Activated CD4-positive, alpha-beta memory T cell treated with anti-CD3 and anti-CD28 coated beads for 36 hours (primary cell): ENCODE measurements at regions of chr17 and their contacts with region 1.

Region 1: GRCh38 chr17:43846221-43846712 is 709 bp upstream of the CD300LG start:
- DNase-seq: peak; percentile 86
- H3K4me3 Mint-ChIP-seq: no peak overlapping the region
- H3K27ac Mint-ChIP-seq: no peak overlapping the region
- H3K4me1 Mint-ChIP-seq: no peaks in the 10 kb centered on the region
- H3K27me3 Mint-ChIP-seq: peaks cover 23% of the 10 kb centered on the region

Region 2: GRCh38 chr17:43694077-43694870 is 152.0 kb before region 1 on chr17:
- CTCF ChIA-PET with region 1: interaction called, 18 read pairs
- POLR2A ChIA-PET with region 1: no interaction called
- intact Hi-C with region 1: no loop called
- DNase-seq: peak; percentile 82
- H3K4me3 Mint-ChIP-seq: peak overlapping the region; percentile 1
- H3K27ac Mint-ChIP-seq: no peak overlapping the region
- H3K4me1 Mint-ChIP-seq: no peaks in the 10 kb centered on the region
- H3K27me3 Mint-ChIP-seq: no peaks in the 10 kb centered on the region

Region 3: DNA sequence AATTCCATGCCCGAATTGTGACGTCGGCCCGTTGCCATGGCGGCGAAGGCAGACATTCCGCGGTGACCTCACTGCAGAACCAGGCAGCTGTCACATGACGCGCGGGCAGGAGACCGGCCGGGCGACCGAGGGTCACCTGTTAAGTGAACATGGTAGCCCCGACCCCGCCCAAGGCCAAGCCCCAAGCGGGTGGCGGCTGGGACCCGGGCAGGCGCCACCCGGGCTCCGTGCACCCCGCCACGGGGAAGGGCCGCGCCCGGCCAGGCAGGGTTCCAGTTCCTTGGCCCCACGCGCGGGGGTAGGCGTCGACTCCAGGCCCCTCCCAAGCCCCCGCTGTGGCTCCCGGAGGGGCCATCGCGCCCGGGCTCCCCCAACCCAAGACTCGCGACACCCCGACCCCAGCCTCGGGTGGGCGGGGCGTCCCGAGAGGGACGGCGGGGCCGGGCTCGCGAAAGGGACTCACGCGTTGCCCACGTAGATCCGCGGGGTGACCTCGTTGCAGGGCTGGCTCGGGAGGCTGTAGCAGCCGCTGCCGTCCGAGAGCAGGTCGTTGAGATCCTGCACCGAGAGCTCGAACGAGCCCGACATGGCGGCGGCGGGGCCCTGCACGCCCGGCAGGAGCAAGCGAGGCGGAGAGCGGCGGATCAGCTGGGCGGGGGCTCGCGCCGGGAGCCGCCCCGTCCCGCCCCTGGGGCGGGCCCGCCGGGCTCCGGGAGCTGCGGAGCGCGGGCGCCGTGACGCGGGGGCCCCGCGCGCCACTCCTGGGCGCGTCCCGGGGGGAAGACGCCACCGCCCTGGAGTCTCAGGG is 67.7 kb before region 1 on chr17 and contains the start of gene DUSP3:
- CTCF ChIA-PET with region 1: interaction called, 3 read pairs
- POLR2A ChIA-PET with region 1: no interaction called
- intact Hi-C with region 1: loop called (anchors 10 kb)
- DNase-seq: peak; percentile 79
- H3K4me3 Mint-ChIP-seq: peak within 1 kb of the TSS; percentile 83
- H3K27ac Mint-ChIP-seq: no peak within 1 kb of the TSS
- H3K4me1 Mint-ChIP-seq: peaks cover 6% of the 10 kb centered on the region
- H3K27me3 Mint-ChIP-seq: peaks cover 24% of the 10 kb centered on the region
- total RNA-seq, gene DUSP3: 13.8 to 14.8 TPM

Region 4: DNA sequence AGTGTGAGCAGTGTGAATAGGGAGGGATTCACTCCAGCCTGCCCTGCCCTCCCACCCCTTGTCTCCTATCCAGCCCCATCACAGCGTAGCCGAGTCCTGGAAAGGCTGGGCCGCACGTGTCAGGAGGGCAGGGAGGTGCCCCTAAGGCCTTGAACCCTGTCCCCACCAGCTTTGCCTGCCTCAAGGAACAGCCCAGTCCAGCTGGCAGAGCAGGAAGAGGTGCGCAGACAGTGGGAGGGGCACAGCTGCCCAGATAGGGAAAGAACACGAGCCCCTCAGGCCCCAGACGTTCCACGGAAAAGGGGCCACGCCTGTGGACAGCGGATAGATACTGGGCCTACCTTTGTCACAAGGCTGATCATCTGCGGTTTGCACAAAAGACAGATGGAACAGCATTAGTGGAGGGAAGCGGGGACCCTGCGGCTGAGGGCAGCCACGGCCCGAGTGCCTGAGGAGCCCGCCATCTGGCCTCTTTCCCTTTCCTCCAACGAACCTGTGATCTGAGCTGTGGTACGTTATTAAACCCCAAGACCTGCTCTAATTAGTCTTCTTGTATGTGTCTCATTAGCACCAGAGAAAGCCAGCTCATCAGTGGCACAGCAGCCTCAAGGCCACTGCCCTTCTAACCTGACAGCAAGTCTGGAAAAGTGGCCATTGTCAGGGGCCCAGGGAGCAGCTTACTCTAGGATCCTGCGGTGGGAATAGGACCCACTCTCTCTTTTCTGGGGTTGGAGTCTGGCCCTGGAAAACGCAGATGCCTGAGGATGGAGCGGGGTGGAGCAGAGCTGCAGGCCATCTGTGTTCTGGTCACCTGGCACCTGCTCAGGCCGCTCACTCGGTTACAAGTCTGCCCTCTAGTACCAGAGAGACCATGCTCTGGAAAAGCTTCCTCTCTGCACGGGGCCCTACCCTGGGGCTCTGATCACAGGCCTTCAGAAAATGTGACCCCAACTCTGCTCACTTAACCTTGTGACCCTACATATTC is 29.6 kb before region 1 on chr17:
- CTCF ChIA-PET with region 1: interaction called, 15 read pairs
- POLR2A ChIA-PET with region 1: interaction called, 3 read pairs
- intact Hi-C with region 1: no loop called
- DNase-seq: no peak
- H3K4me3 Mint-ChIP-seq: no peak overlapping the region
- H3K27ac Mint-ChIP-seq: no peak overlapping the region
- H3K4me1 Mint-ChIP-seq: no peaks in the 10 kb centered on the region
- H3K27me3 Mint-ChIP-seq: no peaks in the 10 kb centered on the region

Region 5: DNA sequence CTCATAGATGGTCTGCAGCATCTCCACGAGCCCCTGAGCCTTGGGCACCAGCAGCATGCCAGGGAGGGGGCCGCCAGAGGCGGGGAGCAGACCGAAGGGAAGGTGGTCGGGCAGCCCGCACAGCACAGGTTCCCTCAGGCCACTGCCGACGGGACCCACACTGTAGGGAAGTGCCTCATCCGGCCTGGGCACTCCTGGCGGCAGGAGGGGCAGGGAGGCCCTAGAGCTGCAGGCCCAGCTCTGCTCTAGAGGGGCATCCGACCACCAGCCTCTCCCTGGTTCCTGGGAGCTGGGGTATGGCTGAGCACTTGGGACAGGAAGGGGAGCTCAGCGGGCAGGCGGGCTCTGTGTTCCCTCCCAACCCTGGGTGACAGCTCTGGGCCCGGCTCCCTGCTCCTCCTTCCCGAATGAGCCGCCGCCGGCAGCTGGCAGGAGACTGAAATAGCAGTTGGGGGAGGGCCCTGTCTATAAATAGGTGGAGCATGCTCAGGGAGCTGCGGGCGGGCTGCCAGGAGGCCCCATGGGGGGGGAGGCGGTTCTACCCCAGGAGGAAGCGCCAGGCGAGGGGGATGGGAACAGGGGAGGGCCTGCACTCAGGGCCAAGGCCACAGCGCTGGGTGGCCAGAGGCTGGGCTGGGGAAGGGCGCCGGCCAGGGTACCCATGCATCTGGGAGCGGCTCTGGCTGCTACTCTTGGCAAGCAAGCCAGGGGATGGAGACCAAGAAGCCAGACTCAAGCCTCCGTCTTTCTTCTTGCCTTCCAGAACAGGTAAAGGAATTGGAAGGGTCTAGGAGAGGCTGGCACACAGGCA is 264.8 kb after region 1 on chr17:
- CTCF ChIA-PET with region 1: no interaction called
- POLR2A ChIA-PET with region 1: no interaction called
- intact Hi-C with region 1: no loop called
- DNase-seq: peak; percentile 64
- H3K4me3 Mint-ChIP-seq: no peak overlapping the region
- H3K27ac Mint-ChIP-seq: no peak overlapping the region
- H3K4me1 Mint-ChIP-seq: peaks cover 15% of the 10 kb centered on the region
- H3K27me3 Mint-ChIP-seq: no peaks in the 10 kb centered on the region